Ascending aorta (tissue), 2 donors: ENCODE measurements at regions of chr15 and their contacts with region 1.

Region 1: GRCh38 chr15:40108855-40109735 is at the start of gene BMF:
- DNase-seq: peak; percentile 99 to 100
- H3K4me3 ChIP-seq: peak within 1 kb of the TSS; percentile 72 to 90
- H3K27ac ChIP-seq: peak within 1 kb of the TSS; percentile 76 to 91
- H3K4me1 ChIP-seq: peaks cover 13 to 34% of the 10 kb centered on the region in 2 donors
- H3K27me3 ChIP-seq: no peaks in the 10 kb centered on the region
- CTCF ChIP-seq: peak in 2 of 3 experiments; percentile 25 to 37
- total RNA-seq, gene BMF: 2.2 TPM

Region 2: GRCh38 chr15:39896846-39897245 is 212.2 kb before region 1 on chr15:
- intact Hi-C with region 1: no loop called
- DNase-seq: no peak
- H3K4me3 ChIP-seq: no peak overlapping the region
- H3K27ac ChIP-seq: no peak overlapping the region
- H3K4me1 ChIP-seq: no peaks in the 10 kb centered on the region
- H3K27me3 ChIP-seq: no peaks in the 10 kb centered on the region
- CTCF ChIP-seq: no peak

Region 3: GRCh38 chr15:40038638-40039543 is 70.2 kb before region 1 on chr15 and contains the start of gene SRP14:
- intact Hi-C with region 1: loop called (anchors 1 kb)
- DNase-seq: peak; percentile 88 to 98
- H3K4me3 ChIP-seq: peak within 1 kb of the TSS; percentile 74 to 82
- H3K27ac ChIP-seq: peak within 1 kb of the TSS; percentile 87 to 93
- H3K4me1 ChIP-seq: peaks cover 0 to 7% of the 10 kb centered on the region in 2 donors
- H3K27me3 ChIP-seq: no peaks in the 10 kb centered on the region
- CTCF ChIP-seq: peak in 1 of 3 experiments; percentile 41
- total RNA-seq, gene SRP14: 365 TPM

Region 4: DNA sequence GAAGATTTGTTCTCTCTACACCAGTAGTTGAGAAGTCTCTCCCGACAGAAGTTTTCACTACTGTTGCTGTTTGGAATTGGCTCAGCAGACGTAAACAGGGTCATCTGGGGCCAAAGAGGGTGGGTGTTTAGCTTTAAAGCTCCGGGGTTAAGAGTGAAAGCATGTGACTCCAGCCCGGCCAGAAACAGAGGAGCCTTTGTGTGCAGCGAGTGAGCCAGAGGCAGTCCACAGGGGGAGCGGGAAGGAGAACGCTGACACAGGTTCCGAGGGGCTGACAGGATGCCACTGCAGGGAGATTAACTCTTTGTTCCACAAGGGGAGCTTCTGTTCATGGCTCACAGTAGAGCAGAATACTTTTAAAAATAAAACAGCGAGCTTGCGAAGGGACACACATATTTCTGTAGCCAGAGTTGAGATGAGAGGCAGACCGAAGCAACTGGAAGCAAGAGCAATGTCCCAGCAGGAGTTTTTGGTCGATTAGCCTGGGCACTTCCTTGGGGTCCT is 27.4 kb before region 1 on chr15:
- intact Hi-C with region 1: loop called (anchors 1 kb)
- DNase-seq: peak in 1 of 2 donors; percentile 79
- H3K4me3 ChIP-seq: peak overlapping the region; percentile 29 to 46
- H3K27ac ChIP-seq: peak overlapping the region; percentile 20 to 44
- H3K4me1 ChIP-seq: peaks cover 9 to 17% of the 10 kb centered on the region in 2 donors
- H3K27me3 ChIP-seq: no peaks in the 10 kb centered on the region
- CTCF ChIP-seq: no peak

Region 5: GRCh38 chr15:40323239-40323952 is 214.3 kb after region 1 on chr15 and contains the start of gene INAFM2:
- intact Hi-C with region 1: loop called (anchors 5 kb)
- DNase-seq: peak; percentile 74 to 96
- H3K4me3 ChIP-seq: peak within 1 kb of the TSS; percentile 74 to 82
- H3K27ac ChIP-seq: peak within 1 kb of the TSS; percentile 90 to 98
- H3K4me1 ChIP-seq: peaks cover 30 to 32% of the 10 kb centered on the region in 2 donors
- H3K27me3 ChIP-seq: no peaks in the 10 kb centered on the region
- CTCF ChIP-seq: peak; percentile 66 to 83 (median 67)
- total RNA-seq, gene INAFM2: 69.8 TPM

Region 6: GRCh38 chr15:40405501-40406381 is 296.6 kb after region 1 on chr15 and contains the start of gene IVD:
- intact Hi-C with region 1: loop called (anchors 10 kb)
- DNase-seq: peak; percentile 72 to 97
- H3K4me3 ChIP-seq: peak within 1 kb of the TSS; percentile 73 to 98
- H3K27ac ChIP-seq: peak within 1 kb of the TSS; percentile 75 to 80
- H3K4me1 ChIP-seq: peaks cover 15 to 17% of the 10 kb centered on the region in 2 donors
- H3K27me3 ChIP-seq: no peaks in the 10 kb centered on the region
- CTCF ChIP-seq: no peak
- total RNA-seq, gene IVD: 39.5 TPM

Region 7: GRCh38 chr15:41116116-41116871 is 1007.2 kb after region 1 on chr15 and contains the start of gene INO80:
- intact Hi-C with region 1: loop called (anchors 5 kb)
- DNase-seq: peak; percentile 85 to 98
- H3K4me3 ChIP-seq: peak within 1 kb of the TSS; percentile 83 to 85
- H3K27ac ChIP-seq: peak within 1 kb of the TSS; percentile 97 to 98
- H3K4me1 ChIP-seq: peaks cover 0 to 11% of the 10 kb centered on the region in 2 donors
- H3K27me3 ChIP-seq: no peaks in the 10 kb centered on the region
- CTCF ChIP-seq: no peak
- total RNA-seq, gene INO80: 57.8 TPM